Motor neuron (in vitro differentiated cells): ENCODE measurements at regions of chr17 and their contacts with region 1.

Region 1: GRCh38 chr17:78865682-78866390 is 25.2 kb upstream of the USP36 start:
- ATAC-seq: peak; percentile 5 to 91 (median 32)
- H3K4me3 ChIP-seq: no peak overlapping the region
- H3K27ac ChIP-seq: no peak overlapping the region
- H3K4me1 ChIP-seq: peaks cover 3% of the 10 kb centered on the region in 2 donors

Region 2: GRCh38 chr17:78501241-78502036 is 364.4 kb before region 1 on chr17:
- in situ Hi-C with region 1: no loop called
- ATAC-seq: no peak
- H3K4me3 ChIP-seq: no peak overlapping the region
- H3K27ac ChIP-seq: no peak overlapping the region
- H3K4me1 ChIP-seq: no peaks in the 10 kb centered on the region

Region 3: GRCh38 chr17:78617511-78618061 is 248.2 kb before region 1 on chr17:
- in situ Hi-C with region 1: no loop called
- ATAC-seq: peak in 2 of 8 experiments; percentile 18 to 21
- H3K4me3 ChIP-seq: no peak overlapping the region
- H3K27ac ChIP-seq: no peak overlapping the region
- H3K4me1 ChIP-seq: no peaks in the 10 kb centered on the region

Region 4: DNA sequence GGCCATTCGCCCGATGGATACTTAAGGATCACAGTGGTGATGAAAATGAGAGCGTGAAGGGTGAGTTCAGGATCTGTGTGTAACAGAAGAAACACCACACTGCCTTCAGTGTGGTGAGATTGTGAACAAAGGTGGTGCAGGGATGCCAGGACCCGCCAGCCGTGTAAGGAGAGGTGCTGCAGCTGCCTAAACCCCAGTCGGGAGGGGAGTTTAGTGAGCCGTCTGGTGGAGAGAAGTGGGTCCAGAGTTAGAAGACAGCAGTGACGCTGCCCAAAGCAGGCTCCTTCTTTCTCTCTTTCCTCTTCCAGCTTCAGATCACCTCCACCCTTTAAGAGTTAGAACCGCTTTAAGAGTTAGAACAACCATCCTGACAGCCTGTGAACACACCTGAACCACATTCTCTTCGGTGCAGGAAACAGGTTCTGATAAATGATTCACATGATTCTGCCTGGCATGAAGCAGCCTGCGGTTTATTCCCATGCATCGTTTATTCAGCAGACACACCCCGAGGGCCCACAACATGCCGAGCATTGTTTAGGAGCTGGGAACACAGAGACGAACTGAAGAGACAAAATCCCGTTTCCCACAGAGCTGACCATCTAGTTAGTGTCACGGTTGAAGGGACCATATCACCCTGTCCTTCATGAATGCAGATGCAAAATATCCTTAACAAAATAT is 204.6 kb before region 1 on chr17:
- in situ Hi-C with region 1: no loop called
- ATAC-seq: peak in 2 of 8 experiments; percentile 59 to 96
- H3K4me3 ChIP-seq: no peak overlapping the region
- H3K27ac ChIP-seq: no peak overlapping the region
- H3K4me1 ChIP-seq: peaks cover 8 to 11% of the 10 kb centered on the region in 2 donors

Region 5: GRCh38 chr17:78962345-78962983 is 96.6 kb after region 1 on chr17:
- in situ Hi-C with region 1: loop called in 6 of 9 experiments (anchors 10 to 25 kb)
- ATAC-seq: peak in 7 of 8 experiments; percentile 23 to 87 (median 82)
- H3K4me3 ChIP-seq: no peak overlapping the region
- H3K27ac ChIP-seq: peak overlapping the region; percentile 59 to 62
- H3K4me1 ChIP-seq: peaks cover 3 to 20% of the 10 kb centered on the region in 2 donors

Region 6: DNA sequence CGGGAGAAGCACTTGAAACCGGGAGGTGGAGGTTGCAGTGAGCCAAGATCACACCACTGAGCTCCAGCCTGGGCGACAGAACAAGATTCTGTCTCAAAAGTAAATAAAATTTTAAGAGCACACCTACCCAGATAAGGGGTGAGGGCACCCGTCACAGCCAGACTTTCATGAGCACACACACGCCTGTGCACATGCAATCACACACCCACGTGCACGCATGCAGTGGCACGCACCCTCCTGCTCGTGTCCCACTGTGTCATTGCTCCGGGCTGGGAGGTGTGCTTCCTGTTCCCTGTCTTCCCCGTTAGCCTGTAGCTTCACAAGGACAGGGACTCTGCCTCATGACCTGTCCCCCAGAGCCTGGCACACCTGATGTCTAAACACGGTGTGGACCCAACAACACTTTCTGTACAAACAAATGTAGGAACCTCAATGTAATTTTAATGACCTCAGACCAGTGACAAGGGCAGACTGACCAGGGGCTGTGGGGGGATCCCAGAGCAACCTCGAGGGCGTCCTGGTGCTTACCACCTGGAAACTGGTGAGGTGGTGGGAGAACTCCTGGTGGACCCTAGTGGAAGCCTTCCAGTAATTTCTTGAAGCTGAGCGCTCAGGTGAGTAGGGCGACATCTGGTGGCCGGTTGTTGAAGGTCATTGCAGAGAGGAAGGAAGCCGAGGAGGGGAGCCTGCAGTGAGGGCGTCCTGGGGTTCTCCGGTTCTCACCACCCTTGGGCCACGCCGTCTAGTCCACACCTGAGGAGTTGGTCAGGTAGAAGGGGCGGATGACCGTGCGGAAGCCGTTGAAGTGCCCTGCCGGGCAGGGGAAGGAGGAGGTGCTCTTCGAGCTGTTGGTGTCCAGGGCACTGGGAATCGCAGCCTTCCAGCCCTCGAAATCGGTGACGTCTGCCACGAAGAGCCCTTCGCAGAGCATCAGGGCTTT is 105.3 kb after region 1 on chr17:
- in situ Hi-C with region 1: loop called in 7 of 9 experiments (anchors 10 to 25 kb)
- ATAC-seq: peak; percentile 10 to 44 (median 22)
- H3K4me3 ChIP-seq: no peak overlapping the region
- H3K27ac ChIP-seq: no peak overlapping the region
- H3K4me1 ChIP-seq: peaks cover 16 to 19% of the 10 kb centered on the region in 2 donors